ENCODE measurements at regions of chr18 and their contacts with region 1.

Region 1: DNA sequence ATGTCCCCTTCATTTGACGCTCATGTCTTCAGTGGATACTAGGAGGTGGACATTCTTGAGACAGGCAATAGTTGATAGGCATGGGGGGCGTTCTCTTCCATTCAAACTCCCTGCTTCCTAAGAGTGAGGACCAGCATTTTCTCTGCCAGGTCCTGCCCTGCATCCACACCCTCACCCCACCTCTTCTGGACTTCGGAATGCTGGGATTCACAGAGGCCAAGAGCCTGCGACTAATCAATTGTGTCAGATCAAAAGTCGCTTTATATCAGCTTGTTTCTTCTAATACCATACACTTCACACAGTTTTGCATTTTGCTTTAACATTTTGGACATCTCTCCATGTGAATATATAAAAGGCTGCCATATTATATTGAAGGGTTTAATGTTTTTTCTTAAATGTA is 210.7 kb downstream of the CCDC102B start:
- DNase-seq: no peak

Region 2: GRCh38 chr18:68769461-68769860 is 239.1 kb before region 1 on chr18:
- intact Hi-C with region 1: no loop called
- DNase-seq: no peak

Region 3: DNA sequence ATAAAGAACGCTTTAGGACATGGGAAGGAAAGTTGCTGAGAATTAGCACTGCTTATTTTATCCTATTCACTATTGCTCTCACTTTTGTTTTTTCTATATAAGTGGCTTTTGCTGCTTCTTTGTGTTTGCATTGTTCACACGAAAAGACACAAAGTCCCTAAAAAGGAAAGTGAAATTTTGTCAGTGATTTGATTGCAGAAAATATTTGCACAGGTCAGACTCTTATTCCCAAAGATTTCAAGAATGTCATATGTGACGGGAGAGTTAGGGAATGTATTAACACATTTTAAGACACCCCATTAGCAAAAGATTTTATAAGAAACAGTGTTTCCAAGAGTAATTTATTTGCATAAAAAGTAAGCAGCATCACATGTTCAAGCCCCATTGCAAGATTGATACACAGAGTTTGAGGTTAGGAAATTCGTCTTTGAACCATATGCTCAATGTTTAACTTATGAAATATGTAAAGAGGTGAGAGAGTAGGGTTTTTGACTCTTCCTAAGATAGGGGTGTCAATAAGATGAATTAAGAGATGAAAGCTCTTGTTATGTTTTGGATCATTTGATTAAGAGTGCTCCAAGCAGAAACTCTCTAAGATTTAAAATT is 153.6 kb before region 1 on chr18:
- intact Hi-C with region 1: no loop called
- DNase-seq: no peak

Region 4: DNA sequence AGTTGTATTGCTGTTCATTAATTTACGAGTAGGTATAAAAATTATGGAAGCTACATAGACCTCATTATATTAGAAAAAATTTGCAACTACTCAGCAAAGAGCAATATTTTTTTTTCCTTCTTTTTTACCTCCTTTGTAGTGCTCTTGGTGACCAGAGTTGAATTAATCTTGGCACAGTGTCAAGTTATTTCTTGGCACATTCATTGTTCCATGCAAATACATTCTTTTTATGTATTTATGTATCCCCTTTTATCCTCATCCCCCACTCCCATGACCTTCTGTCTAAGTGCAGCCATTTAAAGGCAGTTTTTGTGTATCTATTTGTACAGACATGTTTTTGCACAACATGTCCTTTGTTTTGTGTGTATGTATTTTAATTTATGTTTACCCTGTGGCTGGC is 13.9 kb after region 1 on chr18:
- intact Hi-C with region 1: no loop called
- DNase-seq: no peak

Region 5: DNA sequence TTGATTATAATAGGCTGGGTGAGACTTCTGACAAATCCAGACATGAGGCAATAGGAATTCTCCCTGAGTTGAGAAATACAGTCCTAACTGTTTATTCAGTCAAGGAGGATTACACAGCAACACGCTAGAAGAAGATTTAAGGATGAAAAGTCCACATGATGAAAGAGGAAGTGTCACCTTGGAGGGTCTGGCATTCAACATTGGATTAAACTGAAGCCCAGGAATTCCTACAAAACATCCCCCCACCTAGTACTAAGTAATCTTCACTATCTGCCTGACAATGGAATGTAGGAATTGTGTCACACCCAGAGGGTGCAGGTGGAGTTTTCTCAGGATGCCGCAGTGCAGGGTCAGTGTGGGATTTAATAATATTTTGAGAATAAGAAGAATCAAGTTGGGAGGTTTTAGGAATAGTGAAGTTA is 1422.7 kb after region 1 on chr18:
- intact Hi-C with region 1: loop called in 1 of 2 experiments (anchors 5 kb)
- DNase-seq: no peak

Measured in posterior vena cava (tissue), 2 donors.